SK-N-SH (cell line): ENCODE measurements at regions of chr7 and their contacts with region 1.

Region 1: GRCh38 chr7:19708397-19709248 is at the start of gene POLR1F:
- DNase-seq: peak; percentile 93
- H3K4me3 ChIP-seq: peak within 1 kb of the TSS; percentile 82 to 100
- H3K27ac ChIP-seq: peak within 1 kb of the TSS; percentile 38 to 47; a peak in 3 of 4 replicates
- H3K4me1 ChIP-seq: peaks cover 0 to 16% of the 10 kb centered on the region in 2 experiments; a peak in 2 of 4 replicates
- H3K27me3 ChIP-seq: no peaks in the 10 kb centered on the region
- CTCF ChIP-seq: peak; percentile 97
- EP300 ChIP-seq: no peak
- RAD21 ChIP-seq: peak; percentile 69
- polyA plus RNA-seq, gene POLR1F: 5.1 and 8.1 TPM in 2 replicates

Region 2: DNA sequence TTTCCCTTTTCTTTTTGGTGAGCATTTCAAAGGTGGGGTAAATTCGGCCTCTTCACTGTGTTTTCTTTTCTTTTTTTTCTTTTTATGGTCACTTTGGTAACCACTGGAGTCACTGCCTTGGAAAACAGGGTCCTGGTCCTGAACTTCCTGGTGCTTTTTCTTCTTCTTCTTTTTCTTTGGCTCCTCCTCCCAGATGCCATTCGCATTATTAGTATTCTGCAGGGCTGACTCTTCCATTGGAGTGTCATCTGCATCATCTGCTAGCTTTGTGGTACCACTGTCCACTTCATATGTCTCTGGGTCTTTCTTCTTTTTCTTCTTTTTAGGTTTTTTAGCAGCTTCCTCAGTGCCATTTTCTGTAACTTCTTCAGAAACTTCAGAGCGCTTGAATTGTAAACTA is 10.3 kb before region 1 on chr7:
- CTCF ChIA-PET with region 1: interaction called, 31 read pairs
- POLR2A ChIA-PET with region 1: no interaction called
- DNase-seq: no peak
- H3K4me3 ChIP-seq: no peak overlapping the region
- H3K27ac ChIP-seq: no peak overlapping the region
- H3K4me1 ChIP-seq: no peaks in the 10 kb centered on the region; a peak in 1 of 4 replicates
- H3K27me3 ChIP-seq: no peaks in the 10 kb centered on the region
- CTCF ChIP-seq: no peak
- EP300 ChIP-seq: no peak
- RAD21 ChIP-seq: no peak

Region 3: GRCh38 chr7:19728716-19729115 is 20.1 kb after region 1 on chr7:
- CTCF ChIA-PET with region 1: interaction called, 35 read pairs
- POLR2A ChIA-PET with region 1: no interaction called
- DNase-seq: no peak
- H3K4me3 ChIP-seq: no peak overlapping the region
- H3K27ac ChIP-seq: no peak overlapping the region
- H3K4me1 ChIP-seq: no peaks in the 10 kb centered on the region
- H3K27me3 ChIP-seq: peaks cover 4% of the 10 kb centered on the region; the same call in 1 of the 2 replicates
- CTCF ChIP-seq: no peak
- EP300 ChIP-seq: no peak
- RAD21 ChIP-seq: no peak

Region 4: DNA sequence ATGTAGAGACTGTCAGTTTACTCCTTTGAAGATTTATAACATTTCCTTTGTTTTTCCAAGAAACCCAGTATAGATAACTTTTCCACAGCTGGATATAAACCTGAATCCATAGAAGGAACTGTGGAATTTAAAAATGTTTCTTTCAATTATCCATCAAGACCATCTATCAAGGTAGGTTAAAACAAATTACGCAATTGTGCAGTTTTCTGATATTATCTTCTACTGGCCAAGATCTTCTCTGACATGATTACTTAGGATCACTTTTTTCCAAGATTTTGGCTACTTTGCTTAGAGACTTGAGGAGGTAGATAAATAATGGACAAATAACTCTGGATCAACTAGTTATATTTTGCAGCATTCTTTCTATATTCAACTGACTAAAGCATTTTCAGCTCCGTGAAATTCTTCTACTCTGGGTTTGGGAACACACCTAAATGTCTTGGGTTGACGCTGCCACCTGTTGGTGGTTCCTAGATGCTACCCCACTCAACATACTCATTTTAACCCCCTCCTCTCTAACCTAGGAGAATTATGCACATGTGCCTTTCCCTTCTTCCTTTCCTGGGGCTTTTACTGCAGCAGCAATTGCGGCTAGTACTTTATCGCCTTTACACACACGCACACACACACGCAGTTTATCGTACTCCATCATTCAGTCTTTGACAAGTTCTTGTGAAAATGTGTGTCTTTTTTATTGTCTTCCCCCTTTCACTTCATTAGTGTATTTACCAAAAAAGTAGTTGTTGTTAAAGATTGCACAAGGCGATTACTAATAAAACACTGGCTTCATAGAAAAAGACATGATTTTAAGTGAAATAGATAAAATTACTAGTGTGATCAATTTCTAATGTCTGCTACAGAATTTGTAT is 939.5 kb after region 1 on chr7:
- CTCF ChIA-PET with region 1: interaction called, 19 read pairs
- POLR2A ChIA-PET with region 1: no interaction called
- DNase-seq: peak; percentile 51
- H3K4me3 ChIP-seq: no peak overlapping the region
- H3K27ac ChIP-seq: no peak overlapping the region
- H3K4me1 ChIP-seq: no peaks in the 10 kb centered on the region
- H3K27me3 ChIP-seq: no peaks in the 10 kb centered on the region; the same call in 1 of the 2 replicates
- CTCF ChIP-seq: peak; percentile 44; the same call in 1 of the 2 replicates
- EP300 ChIP-seq: no peak
- RAD21 ChIP-seq: peak; percentile 66